Mammary epithelial cell (primary cell): ENCODE measurements at regions of chr16 and their contacts with region 1.

Region 1: DNA sequence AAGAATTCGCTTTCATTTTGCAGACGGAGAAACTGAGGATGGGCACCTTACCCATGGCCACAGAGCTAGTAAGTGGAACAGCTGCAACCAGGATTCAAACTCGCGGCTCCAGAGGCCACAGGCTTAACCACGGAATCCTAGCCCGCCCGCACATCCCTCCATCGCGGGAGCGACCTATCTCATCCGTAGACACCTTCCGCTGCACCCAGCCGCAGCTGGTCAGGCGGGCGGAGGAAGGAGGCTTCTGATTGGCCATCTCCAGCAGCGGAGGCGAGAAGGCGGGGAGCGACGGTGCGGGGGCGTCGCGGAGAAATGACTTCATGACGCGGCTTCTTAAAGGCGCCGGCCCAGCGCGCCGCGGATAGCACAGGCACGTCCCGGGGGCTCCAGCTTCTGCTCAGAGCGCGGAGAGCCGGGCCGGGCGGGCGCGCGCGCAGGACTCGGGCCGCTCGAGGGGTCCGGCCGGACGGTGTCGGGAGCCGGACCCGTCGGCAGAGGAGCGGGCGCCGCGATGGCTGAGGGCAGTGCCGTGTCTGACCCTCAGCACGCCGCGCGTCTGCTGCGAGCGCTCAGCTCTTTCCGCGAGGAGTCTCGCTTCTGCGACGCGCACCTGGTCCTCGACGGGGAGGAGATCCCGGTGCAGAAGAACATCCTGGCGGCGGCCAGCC is at the start of gene GAN:
- DNase-seq: peak; percentile 96
- H3K4me3 ChIP-seq: peak within 1 kb of the TSS; percentile 63 to 89 (median 79)
- H3K27ac ChIP-seq: peak within 1 kb of the TSS; percentile 76
- H3K4me1 ChIP-seq: peaks cover 31% of the 10 kb centered on the region
- H3K27me3 ChIP-seq: no peaks in the 10 kb centered on the region
- CTCF ChIP-seq: no peak
- total RNA-seq, gene GAN: 14.9 to 33.2 TPM

Region 2: DNA sequence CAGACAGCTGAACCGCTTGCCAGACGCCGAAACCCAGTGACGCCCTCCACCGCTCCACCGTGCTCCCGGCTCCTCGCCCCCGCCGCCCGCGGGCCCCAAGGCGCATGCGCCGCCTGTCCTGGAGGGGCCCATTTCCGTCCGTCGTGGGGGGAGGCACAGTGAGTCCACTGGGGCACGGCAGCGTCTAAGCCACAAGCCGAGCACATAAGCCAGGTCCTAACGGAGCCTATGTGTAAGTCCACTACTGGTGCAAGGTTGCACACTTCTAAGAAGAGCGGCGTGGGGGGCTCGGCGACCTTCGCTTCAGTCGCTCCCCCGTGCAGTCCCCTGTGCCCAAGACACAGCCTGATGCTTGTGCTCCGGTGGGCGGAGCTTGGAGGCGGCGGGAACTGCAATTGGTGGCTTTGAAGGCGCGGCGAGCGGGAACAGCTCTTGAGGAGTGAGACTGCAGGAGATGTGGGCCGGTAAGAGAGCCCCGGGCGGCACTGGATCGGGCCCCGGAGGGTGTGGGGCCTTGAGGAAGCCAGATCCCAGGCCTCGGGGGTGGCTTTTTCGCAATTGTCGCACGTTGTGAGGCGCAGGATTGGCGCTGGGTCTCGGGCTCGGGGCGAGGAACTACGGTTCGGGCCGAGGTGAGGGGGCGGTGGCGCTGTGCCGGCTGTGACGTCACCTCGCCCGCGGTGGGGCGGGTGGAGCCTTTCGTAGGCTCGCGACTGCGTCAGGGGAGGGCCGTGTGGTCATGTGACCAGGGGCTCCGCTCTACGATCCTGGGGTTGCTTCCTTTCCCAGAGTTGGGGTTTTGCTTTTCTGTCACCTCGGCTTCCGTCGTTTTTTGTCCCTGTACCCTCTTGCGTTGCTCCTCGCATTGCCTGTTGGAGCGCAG is 307.7 kb before region 1 on chr16 and contains the starts of genes CENPN and CMC2:
- CTCF ChIA-PET with region 1: no interaction called
- dilution Hi-C with region 1: no loop called
- in situ Hi-C with region 1: no loop called
- intact Hi-C with region 1: loop called (anchors 10 kb)
- DNase-seq: peak; percentile 98
- H3K4me3 ChIP-seq: peak within 1 kb of the TSS; percentile 86 to 95 (median 93)
- H3K27ac ChIP-seq: peak within 1 kb of the TSS; percentile 97
- H3K4me1 ChIP-seq: peaks cover 9% of the 10 kb centered on the region
- H3K27me3 ChIP-seq: no peaks in the 10 kb centered on the region
- CTCF ChIP-seq: peak in 1 of 2 donors; percentile 29
- total RNA-seq, gene CENPN: 15.2 to 32.5 TPM
- total RNA-seq, gene CMC2: 30.5 to 73.1 TPM

Region 3: GRCh38 chr16:81095953-81096717 is 218.6 kb before region 1 on chr16 and contains the start of gene GCSH:
- CTCF ChIA-PET with region 1: no interaction called
- dilution Hi-C with region 1: no loop called
- in situ Hi-C with region 1: no loop called
- intact Hi-C with region 1: loop called (anchors 10 kb)
- DNase-seq: peak; percentile 99
- H3K4me3 ChIP-seq: peak within 1 kb of the TSS; percentile 85 to 95 (median 92)
- H3K27ac ChIP-seq: peak within 1 kb of the TSS; percentile 74
- H3K4me1 ChIP-seq: peaks cover 7% of the 10 kb centered on the region
- H3K27me3 ChIP-seq: no peaks in the 10 kb centered on the region
- CTCF ChIP-seq: no peak
- total RNA-seq, gene GCSH: 27.5 to 41.9 TPM

Region 4: GRCh38 chr16:81280393-81280792 is 34.3 kb before region 1 on chr16:
- CTCF ChIA-PET with region 1: interaction called, 12 read pairs
- dilution Hi-C with region 1: no loop called
- in situ Hi-C with region 1: no loop called
- intact Hi-C with region 1: no loop called
- DNase-seq: no peak
- H3K4me3 ChIP-seq: no peak overlapping the region
- H3K27ac ChIP-seq: no peak overlapping the region
- H3K4me1 ChIP-seq: no peaks in the 10 kb centered on the region
- H3K27me3 ChIP-seq: no peaks in the 10 kb centered on the region
- CTCF ChIP-seq: no peak

Region 5: DNA sequence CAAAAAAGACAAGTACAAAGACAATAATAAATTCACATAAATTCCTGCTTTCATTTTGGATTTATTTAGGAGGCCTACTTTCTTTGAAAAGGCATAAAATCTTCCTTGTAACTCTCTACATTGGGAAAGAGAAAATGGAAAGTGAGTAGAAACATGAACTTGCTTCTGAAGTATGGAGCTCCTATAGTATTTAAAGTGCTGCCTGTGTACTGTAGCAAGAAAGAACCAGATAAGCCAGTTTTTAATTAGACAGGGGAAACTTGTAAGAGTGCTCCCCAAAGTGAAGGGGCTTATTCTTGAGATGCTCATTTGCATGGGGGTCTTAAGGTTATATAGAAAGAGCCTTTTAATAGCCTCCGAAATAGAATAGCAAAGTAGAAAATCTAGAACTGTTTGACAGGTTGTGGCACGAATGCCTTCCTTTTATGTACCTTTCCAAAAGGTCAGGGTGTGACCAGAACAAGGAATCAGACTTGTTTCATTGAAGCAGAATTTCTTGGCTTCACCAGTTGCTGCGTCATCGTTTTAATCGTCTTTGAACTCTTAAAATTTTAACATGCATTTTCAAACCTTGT is 12.9 kb after region 1 on chr16:
- CTCF ChIA-PET with region 1: no interaction called
- dilution Hi-C with region 1: no loop called
- in situ Hi-C with region 1: no loop called
- intact Hi-C with region 1: loop called (anchors 1 kb)
- DNase-seq: peak; percentile 60
- H3K4me3 ChIP-seq: peak overlapping the region; percentile 6 to 45 (median 20)
- H3K27ac ChIP-seq: peak overlapping the region; percentile 70
- H3K4me1 ChIP-seq: peaks cover 26% of the 10 kb centered on the region
- H3K27me3 ChIP-seq: no peaks in the 10 kb centered on the region
- CTCF ChIP-seq: no peak

Region 6: DNA sequence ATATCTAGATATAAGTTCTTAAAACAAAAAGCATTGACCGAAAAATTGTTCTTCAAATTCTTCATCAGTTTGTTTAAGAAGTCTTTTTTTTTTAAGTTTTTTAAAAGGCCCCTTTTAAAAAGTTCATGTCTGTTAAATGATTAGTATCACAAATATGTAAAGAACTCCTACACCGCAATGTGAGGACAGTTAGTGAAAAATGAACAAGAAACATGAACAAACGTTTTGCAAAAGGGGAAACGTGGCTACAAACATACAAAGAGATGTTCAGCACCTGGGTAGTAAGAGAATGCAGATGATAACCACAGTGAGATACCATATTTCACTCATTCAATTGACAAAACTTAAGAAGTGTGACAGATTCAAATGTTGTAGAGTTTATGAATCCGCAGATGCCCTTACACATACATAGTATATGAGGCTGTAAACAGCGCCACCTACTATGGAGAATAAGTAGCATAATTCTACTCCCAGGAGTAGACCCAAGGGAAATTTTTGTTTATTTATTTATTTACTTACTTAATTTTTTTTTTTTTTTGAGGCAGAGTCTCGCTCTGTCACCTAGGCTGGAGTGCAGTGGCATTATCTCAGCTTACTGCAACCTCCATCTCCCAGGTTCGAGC is 35.4 kb after region 1 on chr16:
- CTCF ChIA-PET with region 1: no interaction called
- dilution Hi-C with region 1: no loop called
- in situ Hi-C with region 1: no loop called
- intact Hi-C with region 1: no loop called
- DNase-seq: no peak
- H3K4me3 ChIP-seq: no peak overlapping the region
- H3K27ac ChIP-seq: no peak overlapping the region
- H3K4me1 ChIP-seq: no peaks in the 10 kb centered on the region
- H3K27me3 ChIP-seq: no peaks in the 10 kb centered on the region
- CTCF ChIP-seq: peak in 1 of 2 donors; percentile 45